PC-9 (cell line): ENCODE measurements at regions of chr1 and their contacts with region 1.

Region 1: DNA sequence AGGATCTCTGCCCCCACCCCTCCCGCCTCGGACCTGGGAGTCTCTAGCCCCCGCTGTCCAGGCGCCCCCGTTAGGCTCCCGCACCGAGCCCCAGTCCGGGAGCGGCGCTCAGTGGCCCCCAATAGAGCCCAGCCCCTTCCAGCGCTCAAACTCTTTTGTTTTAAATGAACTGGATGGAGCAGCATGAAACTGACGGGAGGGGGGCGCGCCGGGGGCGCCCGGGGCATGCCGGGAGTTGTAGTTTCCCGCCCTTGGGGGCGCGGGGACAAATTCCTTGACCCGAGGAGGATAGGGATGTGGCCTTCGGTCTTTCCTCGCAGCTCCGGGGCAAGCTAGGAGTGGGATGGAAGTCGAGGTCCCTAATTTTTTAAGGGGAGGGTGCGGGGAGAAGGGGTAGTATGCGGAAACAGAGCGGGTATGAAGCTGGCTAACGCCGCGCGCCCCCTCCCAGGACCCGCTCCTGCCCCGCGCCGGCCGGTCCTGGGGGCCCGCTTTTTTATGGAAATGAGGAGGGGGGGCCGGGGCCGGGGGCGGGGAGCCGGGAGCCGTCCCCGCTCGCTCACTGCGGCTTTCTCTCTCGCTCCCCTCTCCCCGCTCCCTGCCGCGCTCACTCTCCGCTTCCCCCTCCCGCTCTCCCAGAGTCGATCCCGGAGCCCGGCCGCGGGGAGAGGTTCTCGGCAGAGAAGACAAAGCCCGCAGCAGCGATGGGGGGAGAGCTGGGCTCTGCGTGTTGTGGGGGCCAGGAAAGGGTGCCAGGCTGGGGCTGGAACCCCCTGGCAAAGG is at the start of gene MEX3A:
- DNase-seq: peak; percentile 44 to 79
- H3K4me3 ChIP-seq: peak within 1 kb of the TSS; percentile 100
- H3K27ac ChIP-seq: no peak within 1 kb of the TSS
- H3K4me1 ChIP-seq: peaks cover 21% of the 10 kb centered on the region
- H3K27me3 ChIP-seq: no peaks in the 10 kb centered on the region
- CTCF ChIP-seq: no peak
- total RNA-seq, gene MEX3A: 6.6 and 7.2 TPM in 2 replicates

Region 2: GRCh38 chr1:154992721-154993571 is 1089.6 kb before region 1 on chr1:
- CTCF ChIA-PET with region 1: no interaction called
- POLR2A ChIA-PET with region 1: interaction called, 10 read pairs
- intact Hi-C with region 1: no loop called
- DNase-seq: no peak
- H3K4me3 ChIP-seq: no peak overlapping the region
- H3K27ac ChIP-seq: no peak overlapping the region
- H3K4me1 ChIP-seq: peaks cover 19% of the 10 kb centered on the region
- H3K27me3 ChIP-seq: no peaks in the 10 kb centered on the region
- CTCF ChIP-seq: no peak; the same call in 1 of the 2 replicates

Region 3: DNA sequence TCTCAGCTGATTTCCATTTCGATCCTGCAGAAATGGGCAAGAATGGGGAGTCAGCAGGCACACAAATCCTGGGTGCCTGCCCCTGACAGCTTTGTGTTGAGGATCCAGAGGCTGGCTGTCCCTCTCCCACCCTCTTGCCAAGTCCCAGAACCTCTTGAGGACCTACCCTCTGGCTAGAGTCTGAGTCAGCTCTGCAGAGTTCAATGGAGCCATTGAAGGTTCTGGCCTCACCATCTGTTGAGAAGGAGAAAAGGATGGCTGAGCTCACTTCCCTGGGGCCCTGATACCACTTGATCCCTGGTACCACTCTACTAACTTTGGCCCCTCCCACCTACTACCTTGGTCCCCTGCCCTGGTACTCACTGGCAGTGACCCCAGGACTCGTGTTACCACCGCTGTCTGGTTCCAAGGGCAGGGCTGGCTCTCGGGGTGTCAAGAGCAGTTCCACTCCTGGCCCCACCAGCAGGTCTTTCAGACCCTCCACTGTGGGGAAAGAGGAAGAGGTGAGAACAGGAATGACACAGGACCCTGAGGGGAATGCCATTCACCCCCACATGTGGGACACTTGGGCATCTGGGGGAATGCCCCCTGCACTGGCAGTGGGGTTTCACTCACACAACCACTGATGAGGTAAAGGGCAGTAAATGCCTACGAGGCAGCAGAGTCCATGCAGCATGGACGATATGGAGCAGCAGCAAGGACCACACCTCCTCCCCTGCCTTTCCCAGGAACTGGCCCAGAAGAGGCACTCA is 130.6 kb before region 1 on chr1:
- CTCF ChIA-PET with region 1: no interaction called
- POLR2A ChIA-PET with region 1: no interaction called
- intact Hi-C with region 1: no loop called
- DNase-seq: no peak
- H3K4me3 ChIP-seq: no peak overlapping the region
- H3K27ac ChIP-seq: no peak overlapping the region
- H3K4me1 ChIP-seq: no peaks in the 10 kb centered on the region
- H3K27me3 ChIP-seq: no peaks in the 10 kb centered on the region
- CTCF ChIP-seq: no peak